CD4-positive, alpha-beta memory T cell (primary cell): ENCODE measurements at regions of chr6 and their contacts with region 1.

Region 1: GRCh38 chr6:36759148-36759759 is 61.6 kb downstream of the RAB44 start:
- DNase-seq: peak; percentile 71 to 77 (median 76)
- H3K4me3 ChIP-seq: no peak overlapping the region
- H3K4me3 Mint-ChIP-seq: peak overlapping the region in 1 of 8 donors; percentile 47
- H3K27ac ChIP-seq: no peak overlapping the region
- H3K27ac Mint-ChIP-seq: peak overlapping the region; percentile 37 to 96 (median 86)
- H3K4me1 ChIP-seq: peaks cover 43% of the 10 kb centered on the region
- H3K4me1 Mint-ChIP-seq: peaks cover 39 to 50% (median 44%) of the 10 kb centered on the region in 4 donors
- H3K27me3 ChIP-seq: no peaks in the 10 kb centered on the region
- H3K27me3 Mint-ChIP-seq: no peaks in the 10 kb centered on the region

Region 2: GRCh38 chr6:36302227-36302976 is 456.9 kb before region 1 on chr6:
- CTCF ChIA-PET with region 1: interaction called, 5 read pairs
- POLR2A ChIA-PET with region 1: no interaction called
- intact Hi-C with region 1: loop called (anchors 1 kb)
- DNase-seq: peak; percentile 86 to 91 (median 87)
- H3K4me3 ChIP-seq: no peak overlapping the region
- H3K4me3 Mint-ChIP-seq: no peak overlapping the region
- H3K27ac ChIP-seq: no peak overlapping the region
- H3K27ac Mint-ChIP-seq: peak overlapping the region in 2 of 7 donors; percentile 30 to 32
- H3K4me1 ChIP-seq: no peaks in the 10 kb centered on the region
- H3K4me1 Mint-ChIP-seq: peaks cover 0 to 9% (median 2%) of the 10 kb centered on the region in 4 donors
- H3K27me3 ChIP-seq: no peaks in the 10 kb centered on the region
- H3K27me3 Mint-ChIP-seq: peaks cover 10 to 22% of the 10 kb centered on the region in 2 donors

Region 3: GRCh38 chr6:36423101-36423824 is 336.0 kb before region 1 on chr6:
- CTCF ChIA-PET with region 1: interaction called, 10 read pairs
- POLR2A ChIA-PET with region 1: interaction called, 3 read pairs
- intact Hi-C with region 1: loop called (anchors 1 kb)
- DNase-seq: peak; percentile 97 to 99 (median 97)
- H3K4me3 ChIP-seq: peak overlapping the region; percentile 69 to 85
- H3K4me3 Mint-ChIP-seq: peak overlapping the region; percentile 91 to 95 (median 93)
- H3K27ac ChIP-seq: peak overlapping the region; percentile 68
- H3K27ac Mint-ChIP-seq: peak overlapping the region; percentile 73 to 97 (median 95)
- H3K4me1 ChIP-seq: peaks cover 15% of the 10 kb centered on the region
- H3K4me1 Mint-ChIP-seq: peaks cover 10 to 19% (median 14%) of the 10 kb centered on the region in 4 donors
- H3K27me3 ChIP-seq: no peaks in the 10 kb centered on the region
- H3K27me3 Mint-ChIP-seq: no peaks in the 10 kb centered on the region

Region 4: GRCh38 chr6:36442671-36443470 is 316.4 kb before region 1 on chr6 and contains the starts of genes KCTD20 and PXT1:
- CTCF ChIA-PET with region 1: interaction called, 3 read pairs
- POLR2A ChIA-PET with region 1: no interaction called
- intact Hi-C with region 1: loop called (anchors 5 kb)
- DNase-seq: peak; percentile 83 to 86 (median 85)
- H3K4me3 ChIP-seq: peak within 1 kb of the TSS; percentile 85 to 96
- H3K4me3 Mint-ChIP-seq: peak within 1 kb of the TSS; percentile 92 to 99 (median 97)
- H3K27ac ChIP-seq: peak within 1 kb of the TSS; percentile 92
- H3K27ac Mint-ChIP-seq: peak within 1 kb of the TSS; percentile 87 to 99 (median 99)
- H3K4me1 ChIP-seq: peaks cover 53% of the 10 kb centered on the region
- H3K4me1 Mint-ChIP-seq: peaks cover 27 to 61% (median 42%) of the 10 kb centered on the region in 4 donors
- H3K27me3 ChIP-seq: no peaks in the 10 kb centered on the region
- H3K27me3 Mint-ChIP-seq: no peaks in the 10 kb centered on the region
- total RNA-seq, gene KCTD20: 35.2 to 38.9 TPM
- total RNA-seq, gene PXT1: 0.25 TPM in 1 of 2 experiments, not detected in the other

Region 5: GRCh38 chr6:36615018-36615761 is 144.1 kb before region 1 on chr6:
- CTCF ChIA-PET with region 1: interaction called, 56 read pairs
- POLR2A ChIA-PET with region 1: interaction called, 6 read pairs
- intact Hi-C with region 1: loop called (anchors 1 kb)
- DNase-seq: peak; percentile 50 to 67 (median 65)
- H3K4me3 ChIP-seq: no peak overlapping the region
- H3K4me3 Mint-ChIP-seq: no peak overlapping the region
- H3K27ac ChIP-seq: no peak overlapping the region
- H3K27ac Mint-ChIP-seq: peak overlapping the region; percentile 52 to 87 (median 82)
- H3K4me1 ChIP-seq: peaks cover 9% of the 10 kb centered on the region
- H3K4me1 Mint-ChIP-seq: peaks cover 12 to 28% (median 14%) of the 10 kb centered on the region in 4 donors
- H3K27me3 ChIP-seq: no peaks in the 10 kb centered on the region
- H3K27me3 Mint-ChIP-seq: no peaks in the 10 kb centered on the region

Region 6: DNA sequence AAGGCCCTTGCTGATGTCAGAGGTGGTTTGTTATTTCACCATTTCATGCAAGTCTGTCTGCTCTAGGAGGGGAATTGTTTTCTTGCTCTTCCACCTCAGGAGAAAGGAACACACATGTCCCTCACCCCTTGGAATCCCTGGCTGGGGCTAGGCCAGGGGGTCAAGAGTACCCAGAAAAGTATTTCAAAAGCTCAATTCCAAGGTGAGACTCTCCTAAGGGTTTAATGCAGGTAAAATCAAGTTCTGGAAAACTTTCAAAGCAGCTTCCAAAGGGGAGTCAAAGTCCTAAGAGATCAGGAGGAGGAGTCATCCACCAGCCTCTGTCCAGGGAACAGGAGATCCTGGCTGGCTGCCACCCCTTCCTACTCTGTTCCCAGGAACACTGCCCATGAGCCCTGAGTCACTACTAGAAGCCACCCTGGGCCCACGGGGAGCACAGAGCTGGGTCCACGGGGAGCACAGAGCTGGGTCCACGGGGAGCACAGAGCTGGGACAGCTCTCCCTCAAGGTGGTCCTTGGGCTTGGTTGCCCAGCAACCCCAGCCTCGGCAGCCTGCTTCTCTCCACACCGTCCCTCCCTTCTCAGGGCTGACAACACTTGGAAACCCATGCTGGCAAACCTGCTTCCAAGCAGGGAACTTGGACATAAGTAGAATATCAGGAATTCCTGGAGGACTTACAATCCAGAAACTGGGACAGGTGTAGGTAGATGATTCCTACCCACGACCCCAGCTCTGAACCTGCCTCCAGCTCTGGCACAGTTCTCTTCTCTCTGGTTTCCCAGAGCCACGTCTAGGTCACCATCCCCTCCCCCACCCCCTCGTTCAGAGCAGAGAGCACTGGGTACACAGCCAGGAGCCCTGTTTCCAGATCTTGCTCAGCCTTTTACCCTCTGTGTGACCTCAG is 116.1 kb before region 1 on chr6:
- CTCF ChIA-PET with region 1: no interaction called
- POLR2A ChIA-PET with region 1: no interaction called
- intact Hi-C with region 1: no loop called
- DNase-seq: no peak
- H3K4me3 ChIP-seq: no peak overlapping the region
- H3K4me3 Mint-ChIP-seq: no peak overlapping the region
- H3K27ac ChIP-seq: no peak overlapping the region
- H3K27ac Mint-ChIP-seq: peak overlapping the region in 2 of 7 donors; percentile 22 to 60
- H3K4me1 ChIP-seq: no peaks in the 10 kb centered on the region
- H3K4me1 Mint-ChIP-seq: no peaks in the 10 kb centered on the region
- H3K27me3 ChIP-seq: no peaks in the 10 kb centered on the region
- H3K27me3 Mint-ChIP-seq: no peaks in the 10 kb centered on the region

Region 7: GRCh38 chr6:36678518-36679027 is 80.7 kb before region 1 on chr6 and contains the start of gene CDKN1A:
- CTCF ChIA-PET with region 1: interaction called, 40 read pairs
- POLR2A ChIA-PET with region 1: interaction called, 6 read pairs
- intact Hi-C with region 1: loop called (anchors 1 kb)
- DNase-seq: peak; percentile 62 to 84 (median 72)
- H3K4me3 ChIP-seq: peak within 1 kb of the TSS; percentile 77 to 90
- H3K4me3 Mint-ChIP-seq: peak within 1 kb of the TSS; percentile 89 to 98 (median 94)
- H3K27ac ChIP-seq: peak within 1 kb of the TSS; percentile 80
- H3K27ac Mint-ChIP-seq: peak within 1 kb of the TSS; percentile 90 to 100 (median 95)
- H3K4me1 ChIP-seq: peaks cover 50% of the 10 kb centered on the region
- H3K4me1 Mint-ChIP-seq: peaks cover 26 to 63% (median 47%) of the 10 kb centered on the region in 4 donors
- H3K27me3 ChIP-seq: no peaks in the 10 kb centered on the region
- H3K27me3 Mint-ChIP-seq: peaks cover 0 to 6% of the 10 kb centered on the region in 2 donors
- total RNA-seq, gene CDKN1A: 10.5 to 12.9 TPM

Region 8: GRCh38 chr6:36743538-36744303 is 15.5 kb before region 1 on chr6:
- CTCF ChIA-PET with region 1: interaction called, 23 read pairs
- POLR2A ChIA-PET with region 1: no interaction called
- intact Hi-C with region 1: no loop called
- DNase-seq: no peak
- H3K4me3 ChIP-seq: no peak overlapping the region
- H3K4me3 Mint-ChIP-seq: no peak overlapping the region
- H3K27ac ChIP-seq: no peak overlapping the region
- H3K27ac Mint-ChIP-seq: peak overlapping the region in 4 of 7 donors; percentile 29 to 77 (median 46)
- H3K4me1 ChIP-seq: peaks cover 21% of the 10 kb centered on the region
- H3K4me1 Mint-ChIP-seq: peaks cover 7 to 26% (median 12%) of the 10 kb centered on the region in 4 donors
- H3K27me3 ChIP-seq: no peaks in the 10 kb centered on the region
- H3K27me3 Mint-ChIP-seq: no peaks in the 10 kb centered on the region

Region 9: GRCh38 chr6:36820700-36821580 is 61.7 kb after region 1 on chr6:
- CTCF ChIA-PET with region 1: no interaction called
- POLR2A ChIA-PET with region 1: no interaction called
- intact Hi-C with region 1: no loop called
- DNase-seq: no peak
- H3K4me3 ChIP-seq: no peak overlapping the region
- H3K4me3 Mint-ChIP-seq: no peak overlapping the region
- H3K27ac ChIP-seq: no peak overlapping the region
- H3K27ac Mint-ChIP-seq: no peak overlapping the region
- H3K4me1 ChIP-seq: no peaks in the 10 kb centered on the region
- H3K4me1 Mint-ChIP-seq: no peaks in the 10 kb centered on the region
- H3K27me3 ChIP-seq: no peaks in the 10 kb centered on the region
- H3K27me3 Mint-ChIP-seq: peaks cover 2% of the 10 kb centered on the region in 2 donors

Region 10: DNA sequence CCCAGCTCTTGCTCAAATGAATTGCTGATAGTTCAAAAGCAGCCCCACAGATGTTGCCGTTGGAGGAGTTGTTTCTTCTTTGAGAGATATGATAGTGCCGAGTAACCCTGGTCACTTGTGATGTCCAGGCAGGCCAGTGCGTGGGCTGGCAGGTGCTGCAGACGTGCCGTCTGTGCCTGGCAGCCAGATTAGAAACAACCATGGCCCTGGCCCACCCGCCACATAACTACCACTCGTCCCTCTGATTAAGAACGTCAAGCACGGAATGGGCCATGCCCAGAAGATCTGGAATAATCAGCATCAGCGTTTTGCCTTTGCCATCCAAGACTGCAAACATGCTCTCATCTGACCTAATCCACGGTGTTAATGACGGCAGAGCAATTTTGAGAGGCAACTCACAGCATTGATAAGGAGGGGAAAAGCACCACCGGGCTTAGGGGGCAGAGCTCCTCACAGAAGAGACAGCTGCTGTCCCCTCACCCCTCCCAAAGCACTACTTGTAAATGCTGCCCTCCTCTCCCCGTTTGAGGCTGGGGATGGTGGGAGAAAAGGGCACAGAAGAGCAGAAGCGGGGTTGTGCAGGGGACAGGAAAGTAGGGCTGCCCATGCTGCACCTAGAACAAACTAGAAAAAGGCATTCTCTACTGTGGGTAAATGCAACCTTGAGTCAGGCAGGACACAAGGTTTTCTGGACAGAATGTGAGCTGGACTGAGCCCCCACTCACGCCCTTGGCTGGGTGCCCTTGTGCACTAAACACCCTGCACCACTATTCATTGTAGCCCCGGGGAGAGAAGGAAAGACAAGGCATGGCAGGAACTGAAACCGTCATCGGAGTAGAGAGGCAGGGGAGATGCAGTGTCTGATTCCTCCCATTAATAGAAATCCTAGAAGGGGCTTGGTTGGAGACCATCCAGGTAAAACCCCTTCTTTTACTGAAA is 85.2 kb after region 1 on chr6:
- CTCF ChIA-PET with region 1: no interaction called
- POLR2A ChIA-PET with region 1: no interaction called
- intact Hi-C with region 1: no loop called
- DNase-seq: no peak
- H3K4me3 ChIP-seq: no peak overlapping the region
- H3K4me3 Mint-ChIP-seq: peak overlapping the region in 1 of 8 donors; percentile 53
- H3K27ac ChIP-seq: no peak overlapping the region
- H3K27ac Mint-ChIP-seq: no peak overlapping the region
- H3K4me1 ChIP-seq: peaks cover 14% of the 10 kb centered on the region
- H3K4me1 Mint-ChIP-seq: peaks cover 1 to 10% (median 6%) of the 10 kb centered on the region in 4 donors
- H3K27me3 ChIP-seq: peaks cover 9% of the 10 kb centered on the region
- H3K27me3 Mint-ChIP-seq: peaks cover 4 to 5% of the 10 kb centered on the region in 2 donors